Endothelial cell of umbilical vein (primary cell): ENCODE measurements at regions of chr11 and their contacts with region 1.

Region 1: DNA sequence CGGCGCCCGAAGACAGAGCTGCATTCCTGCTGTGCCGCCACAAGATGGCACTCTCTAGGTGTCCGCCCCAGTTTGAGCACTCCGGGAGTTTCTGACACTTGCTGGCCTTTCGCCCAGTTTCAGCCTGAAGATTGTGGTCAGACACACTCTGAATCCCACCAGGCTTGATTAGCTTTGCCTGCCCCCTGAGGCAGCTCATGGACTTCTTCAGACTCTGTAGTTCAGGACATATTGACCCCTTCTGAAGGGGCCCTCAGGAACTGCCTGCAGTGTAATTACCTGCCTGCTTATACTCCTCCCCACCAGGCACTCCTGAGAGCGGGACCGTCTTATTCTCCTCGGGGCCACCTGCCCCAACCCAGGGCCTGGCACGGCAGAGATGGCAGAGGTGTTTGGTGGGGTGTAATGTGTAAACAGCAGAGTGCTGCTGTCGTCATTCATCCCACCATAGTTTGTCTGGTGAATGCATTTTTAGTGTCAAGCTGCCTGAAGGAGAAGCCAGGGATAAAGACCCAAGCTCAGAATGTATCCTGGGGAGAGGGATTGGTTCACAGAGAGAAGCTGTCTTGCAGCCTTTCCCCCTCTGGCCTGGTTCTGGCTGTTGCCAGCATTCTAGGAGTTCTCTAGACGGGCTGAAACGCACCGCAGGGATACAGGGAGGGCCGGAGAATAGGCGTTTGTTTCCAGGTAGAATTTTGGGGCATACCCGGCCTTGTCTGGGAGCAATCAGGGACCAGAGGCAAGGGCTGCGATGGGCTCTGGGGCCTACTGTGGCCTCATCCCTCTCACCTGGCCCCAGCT is 46.4 kb downstream of the EIF3F start:
- DNase-seq: peak; percentile 63
- H3K4me3 ChIP-seq: no peak overlapping the region
- H3K27ac ChIP-seq: no peak overlapping the region
- H3K4me1 ChIP-seq: no peaks in the 10 kb centered on the region
- H3K27me3 ChIP-seq: no peaks in the 10 kb centered on the region
- CTCF ChIP-seq: peak; percentile 83 to 92
- POLR2A ChIP-seq: no peak

Region 2: DNA sequence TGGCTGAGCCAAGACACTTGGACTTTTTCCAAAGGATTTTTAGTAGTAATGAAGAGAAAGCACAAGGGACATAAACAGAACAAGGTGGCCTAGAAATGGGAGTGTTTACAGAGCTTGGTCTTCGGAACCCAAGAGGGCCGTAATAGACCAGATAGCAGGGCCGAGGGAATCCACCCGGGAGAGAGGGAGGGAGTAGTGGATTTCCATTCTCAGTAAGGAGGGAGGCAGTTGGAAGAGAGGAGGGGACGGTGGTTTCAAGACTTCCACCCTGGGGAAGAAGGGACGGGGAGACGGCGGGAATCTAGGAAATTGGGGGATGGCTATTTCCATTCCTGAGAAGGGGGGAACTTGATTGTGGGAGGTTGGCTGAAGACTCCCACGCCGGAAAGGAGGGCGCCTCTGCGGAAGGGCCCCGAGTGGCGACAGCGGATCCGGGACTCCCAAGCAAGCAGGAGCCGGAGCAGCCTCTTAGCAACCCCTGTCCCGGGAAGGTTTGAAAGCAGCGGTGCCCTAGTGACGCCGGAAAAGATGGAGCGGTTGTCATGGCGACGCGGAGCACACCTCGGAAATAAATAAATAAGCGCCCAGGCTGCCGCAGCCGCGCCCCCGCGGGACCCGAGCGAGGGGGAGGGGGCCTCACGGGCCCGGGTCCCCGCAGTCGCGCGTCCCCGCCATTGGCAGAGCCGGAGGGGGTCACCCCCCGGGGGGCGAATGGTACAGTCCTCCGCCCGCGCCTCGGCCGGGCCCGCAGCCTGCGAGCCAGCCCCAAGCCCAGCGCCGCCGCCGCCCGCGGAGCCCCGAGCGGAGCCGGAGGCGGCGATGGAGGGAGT is 14.8 kb before region 1 on chr11:
- CTCF ChIA-PET with region 1: interaction called, 20 read pairs
- POLR2A ChIA-PET with region 1: no interaction called
- dilution Hi-C with region 1: no loop called
- intact Hi-C with region 1: no loop called
- DNase-seq: peak; percentile 30
- H3K4me3 ChIP-seq: peak overlapping the region; percentile 25 to 39 (median 36)
- H3K27ac ChIP-seq: no peak overlapping the region
- H3K4me1 ChIP-seq: peaks cover 5% of the 10 kb centered on the region
- H3K27me3 ChIP-seq: peaks cover 37 to 43% of the 10 kb centered on the region in 2 experiments
- CTCF ChIP-seq: no peak
- POLR2A ChIP-seq: no peak

Region 3: DNA sequence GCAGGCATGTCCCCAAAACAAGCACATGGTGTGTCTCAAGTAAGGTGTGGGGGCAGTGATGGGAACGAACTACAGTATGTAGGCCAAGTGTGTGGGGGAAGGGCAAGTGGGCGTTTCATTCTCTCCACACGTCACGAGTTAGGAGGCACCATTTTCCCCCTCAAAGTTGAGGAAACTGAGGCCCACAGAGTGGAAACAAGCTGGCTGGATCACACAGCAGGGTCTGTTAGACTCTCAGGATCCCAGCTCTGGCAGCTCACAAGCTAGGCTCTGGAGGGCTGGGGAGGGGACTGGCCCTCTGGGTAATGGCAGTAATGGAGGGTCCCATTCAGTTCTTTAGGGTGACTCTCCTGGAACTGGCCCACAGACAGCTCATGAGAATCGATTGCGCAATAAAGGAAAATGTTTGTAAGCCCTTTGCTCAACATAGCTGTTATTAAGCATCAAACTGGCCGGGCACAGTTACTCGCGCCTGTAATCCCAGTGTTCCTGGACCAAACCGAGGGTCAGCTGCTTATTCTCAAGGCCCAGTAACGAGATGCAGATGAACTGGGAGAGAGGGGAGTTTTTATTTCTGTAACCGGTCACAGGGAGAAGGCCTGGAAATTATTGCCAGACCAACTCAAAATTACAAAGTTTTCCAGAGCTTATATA is 23.4 kb after region 1 on chr11:
- CTCF ChIA-PET with region 1: interaction called, 13 read pairs
- POLR2A ChIA-PET with region 1: no interaction called
- dilution Hi-C with region 1: no loop called
- intact Hi-C with region 1: no loop called
- DNase-seq: no peak
- H3K4me3 ChIP-seq: no peak overlapping the region
- H3K27ac ChIP-seq: no peak overlapping the region
- H3K4me1 ChIP-seq: no peaks in the 10 kb centered on the region
- H3K27me3 ChIP-seq: no peaks in the 10 kb centered on the region
- CTCF ChIP-seq: no peak
- POLR2A ChIP-seq: no peak

Region 4: DNA sequence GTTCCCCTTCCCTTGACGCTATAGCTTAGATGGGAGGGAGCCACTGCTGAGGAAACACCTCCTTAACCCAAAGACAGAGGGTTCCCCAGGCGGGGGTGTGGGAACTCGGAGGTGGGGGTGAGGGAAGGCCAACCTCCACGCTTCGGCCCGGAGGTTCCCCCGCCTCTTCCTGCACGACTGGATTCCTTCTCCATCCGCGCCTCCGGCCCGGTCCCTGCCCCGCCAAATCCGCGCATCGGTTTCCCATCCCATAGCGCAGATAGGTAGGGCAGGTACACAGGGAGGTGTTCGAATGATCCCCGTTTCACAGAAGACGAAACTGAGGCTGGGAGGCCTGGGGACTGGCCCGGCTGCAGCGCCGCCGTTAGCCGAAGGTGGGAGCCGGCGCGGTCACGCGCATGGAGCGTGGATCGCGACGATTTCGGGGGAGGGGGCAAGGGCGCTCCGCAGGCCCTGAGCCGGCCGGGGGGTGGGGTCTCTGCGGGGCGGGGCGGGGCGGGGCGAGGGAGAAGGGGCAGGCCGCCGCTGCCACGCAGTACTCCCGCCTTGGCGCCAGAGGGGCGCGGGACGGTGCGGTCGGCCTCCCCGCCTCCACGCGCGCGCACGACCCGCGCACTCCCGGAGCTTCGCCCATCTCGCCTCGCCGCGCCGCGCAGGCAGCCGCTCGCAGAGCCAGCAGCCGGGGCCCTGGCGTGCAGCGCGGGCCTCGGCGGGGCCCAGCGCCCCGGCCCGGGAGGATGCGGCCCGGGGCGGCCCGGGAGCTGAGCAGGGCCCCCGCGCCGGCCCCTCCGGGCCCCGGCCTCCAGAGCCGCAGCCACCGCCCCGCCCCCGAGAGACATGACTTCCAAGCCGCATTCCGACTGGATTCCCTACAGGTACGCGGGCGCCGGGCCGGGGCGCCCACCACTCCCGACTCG is 47.4 kb after region 1 on chr11 and contains the start of gene TUB:
- CTCF ChIA-PET with region 1: interaction called, 29 read pairs
- POLR2A ChIA-PET with region 1: no interaction called
- dilution Hi-C with region 1: no loop called
- intact Hi-C with region 1: no loop called
- DNase-seq: no peak
- H3K4me3 ChIP-seq: peak within 1 kb of the TSS in 2 of 3 experiments; percentile 35 to 42
- H3K27ac ChIP-seq: no peak within 1 kb of the TSS
- H3K4me1 ChIP-seq: peaks cover 6% of the 10 kb centered on the region
- H3K27me3 ChIP-seq: peaks cover 2 to 5% of the 10 kb centered on the region in 2 experiments
- CTCF ChIP-seq: no peak
- POLR2A ChIP-seq: no peak
- total RNA-seq, gene TUB: 3.9 and 4.9 TPM in 2 replicates

Region 5: GRCh38 chr11:8092587-8093424 is 59.3 kb after region 1 on chr11:
- CTCF ChIA-PET with region 1: interaction called, 528 read pairs
- POLR2A ChIA-PET with region 1: no interaction called
- dilution Hi-C with region 1: no loop called
- intact Hi-C with region 1: loop called (anchors 1 kb)
- DNase-seq: peak; percentile 61
- H3K4me3 ChIP-seq: no peak overlapping the region
- H3K27ac ChIP-seq: no peak overlapping the region
- H3K4me1 ChIP-seq: no peaks in the 10 kb centered on the region
- H3K27me3 ChIP-seq: no peaks in the 10 kb centered on the region
- CTCF ChIP-seq: peak; percentile 67 to 68
- POLR2A ChIP-seq: no peak